Heart right ventricle (tissue), 16 donors: ENCODE measurements at regions of chr19 and their contacts with region 1.

Region 1: GRCh38 chr19:7348587-7349230 is at the start of gene ARHGEF18:
- DNase-seq: no peak
- ATAC-seq: peak in 7 of 8 donors; percentile 39 to 63 (median 56)
- H3K4me3 ChIP-seq: peak within 1 kb of the TSS in 2 of 10 donors; percentile 3 to 56
- H3K27ac ChIP-seq: peak within 1 kb of the TSS in 1 of 10 donors; percentile 86
- H3K4me1 ChIP-seq: peaks cover 0 to 50% (median 0%) of the 10 kb centered on the region in 9 donors
- H3K27me3 ChIP-seq: peaks cover 0 to 17% (median 0%) of the 10 kb centered on the region in 7 donors
- CTCF ChIP-seq: no peak
- total RNA-seq, gene ARHGEF18: 4.8 to 13.3 (median 8.7) TPM

Region 2: GRCh38 chr19:7145494-7146485 is 202.9 kb before region 1 on chr19:
- intact Hi-C with region 1: loop called in 3 of 10 experiments (anchors 2 to 5 kb)
- DNase-seq: no peak
- ATAC-seq: peak in 1 of 8 donors; percentile 35
- H3K4me3 ChIP-seq: no peak overlapping the region
- H3K27ac ChIP-seq: peak overlapping the region in 1 of 10 donors; percentile 64
- H3K4me1 ChIP-seq: peaks cover 0 to 12% (median 0%) of the 10 kb centered on the region in 9 donors
- H3K27me3 ChIP-seq: no peaks in the 10 kb centered on the region
- CTCF ChIP-seq: no peak

Region 3: GRCh38 chr19:7152568-7152967 is 196.1 kb before region 1 on chr19:
- intact Hi-C with region 1: loop called in 3 of 10 experiments (anchors 2 to 5 kb)
- DNase-seq: no peak
- ATAC-seq: no peak
- H3K4me3 ChIP-seq: no peak overlapping the region
- H3K27ac ChIP-seq: peak overlapping the region in 2 of 10 donors; percentile 40 to 41
- H3K4me1 ChIP-seq: peaks cover 0 to 8% (median 3%) of the 10 kb centered on the region in 9 donors
- H3K27me3 ChIP-seq: no peaks in the 10 kb centered on the region
- CTCF ChIP-seq: no peak

Region 4: DNA sequence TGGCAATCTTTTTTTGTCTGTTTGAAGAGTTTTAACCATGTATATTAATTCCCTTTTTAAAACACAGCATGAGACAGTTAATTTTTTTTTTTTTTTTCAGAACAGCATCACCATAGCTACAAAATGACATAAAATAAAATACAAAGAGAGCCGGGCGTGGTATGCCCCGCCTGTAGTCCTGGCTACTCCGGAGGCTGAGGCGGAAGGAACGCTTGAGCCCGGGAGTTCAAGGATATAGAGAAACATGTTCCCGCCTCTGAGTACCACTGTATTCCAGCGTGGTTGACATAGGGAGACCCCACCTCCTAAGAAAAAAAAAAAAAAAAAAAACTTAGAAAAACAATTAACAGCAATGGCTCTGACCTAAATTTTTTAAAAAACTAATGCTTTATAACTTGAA is 44.5 kb before region 1 on chr19:
- intact Hi-C with region 1: no loop called
- DNase-seq: no peak
- ATAC-seq: peak in 1 of 8 donors; percentile 42
- H3K4me3 ChIP-seq: no peak overlapping the region
- H3K27ac ChIP-seq: no peak overlapping the region
- H3K4me1 ChIP-seq: no peaks in the 10 kb centered on the region
- H3K27me3 ChIP-seq: no peaks in the 10 kb centered on the region
- CTCF ChIP-seq: no peak

Region 5: DNA sequence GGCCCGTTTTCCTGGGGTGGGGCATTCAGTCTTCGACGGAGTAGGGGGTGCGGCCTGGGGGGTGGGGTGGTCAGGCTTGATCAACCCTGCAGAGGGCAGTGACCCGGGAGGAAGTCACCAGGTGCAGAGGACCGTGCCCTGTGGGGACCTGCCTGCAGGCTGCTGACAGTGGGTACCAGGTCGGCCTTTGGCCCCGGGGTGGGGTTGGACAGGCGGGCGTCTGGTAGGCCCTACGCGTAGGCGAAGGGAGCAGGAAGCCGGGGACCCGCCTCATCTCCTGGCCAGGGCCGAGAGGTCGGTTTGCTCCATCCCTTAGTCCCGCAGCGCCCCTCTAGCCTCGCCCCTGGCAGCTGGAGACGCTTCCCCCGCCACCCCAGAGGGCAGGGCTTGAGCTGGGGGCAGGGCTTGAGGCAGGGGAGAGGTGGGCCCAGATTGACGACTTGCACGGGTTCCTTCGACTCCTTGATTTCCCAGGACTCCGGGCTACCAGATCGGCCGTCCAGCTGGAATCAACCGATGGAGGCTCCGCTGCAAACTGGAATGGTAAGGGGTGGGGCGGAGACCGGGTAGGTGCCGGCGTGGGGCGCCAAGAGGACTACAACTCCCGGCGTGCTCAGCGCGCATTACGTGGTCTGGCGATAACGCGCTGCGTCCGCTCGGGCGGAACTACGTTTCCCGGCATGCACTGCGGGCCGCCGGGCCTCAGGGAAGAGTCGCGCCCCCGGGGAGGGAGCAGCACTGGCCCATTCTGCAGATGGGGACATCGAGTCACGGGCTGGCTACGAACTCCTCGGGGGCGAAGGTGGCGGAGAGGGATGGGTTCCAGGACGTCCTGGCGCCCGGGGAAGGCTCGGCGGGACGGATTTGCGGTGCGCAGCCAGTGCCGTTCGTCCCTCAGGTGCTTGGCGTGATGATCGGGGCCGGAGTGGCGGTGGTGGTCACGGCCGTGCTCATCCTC is 186.6 kb after region 1 on chr19 and contains the start of gene PNPLA6:
- intact Hi-C with region 1: loop called in 1 of 10 experiments (anchors 10 kb)
- DNase-seq: peak; percentile 96 to 98
- ATAC-seq: peak; percentile 83 to 92 (median 89)
- H3K4me3 ChIP-seq: peak within 1 kb of the TSS; percentile 74 to 98 (median 90)
- H3K27ac ChIP-seq: peak within 1 kb of the TSS; percentile 67 to 95 (median 91)
- H3K4me1 ChIP-seq: peaks cover 0 to 20% (median 14%) of the 10 kb centered on the region in 9 donors
- H3K27me3 ChIP-seq: no peaks in the 10 kb centered on the region
- CTCF ChIP-seq: no peak
- total RNA-seq, gene PNPLA6: 33.9 to 73.8 (median 41.6) TPM

Region 6: DNA sequence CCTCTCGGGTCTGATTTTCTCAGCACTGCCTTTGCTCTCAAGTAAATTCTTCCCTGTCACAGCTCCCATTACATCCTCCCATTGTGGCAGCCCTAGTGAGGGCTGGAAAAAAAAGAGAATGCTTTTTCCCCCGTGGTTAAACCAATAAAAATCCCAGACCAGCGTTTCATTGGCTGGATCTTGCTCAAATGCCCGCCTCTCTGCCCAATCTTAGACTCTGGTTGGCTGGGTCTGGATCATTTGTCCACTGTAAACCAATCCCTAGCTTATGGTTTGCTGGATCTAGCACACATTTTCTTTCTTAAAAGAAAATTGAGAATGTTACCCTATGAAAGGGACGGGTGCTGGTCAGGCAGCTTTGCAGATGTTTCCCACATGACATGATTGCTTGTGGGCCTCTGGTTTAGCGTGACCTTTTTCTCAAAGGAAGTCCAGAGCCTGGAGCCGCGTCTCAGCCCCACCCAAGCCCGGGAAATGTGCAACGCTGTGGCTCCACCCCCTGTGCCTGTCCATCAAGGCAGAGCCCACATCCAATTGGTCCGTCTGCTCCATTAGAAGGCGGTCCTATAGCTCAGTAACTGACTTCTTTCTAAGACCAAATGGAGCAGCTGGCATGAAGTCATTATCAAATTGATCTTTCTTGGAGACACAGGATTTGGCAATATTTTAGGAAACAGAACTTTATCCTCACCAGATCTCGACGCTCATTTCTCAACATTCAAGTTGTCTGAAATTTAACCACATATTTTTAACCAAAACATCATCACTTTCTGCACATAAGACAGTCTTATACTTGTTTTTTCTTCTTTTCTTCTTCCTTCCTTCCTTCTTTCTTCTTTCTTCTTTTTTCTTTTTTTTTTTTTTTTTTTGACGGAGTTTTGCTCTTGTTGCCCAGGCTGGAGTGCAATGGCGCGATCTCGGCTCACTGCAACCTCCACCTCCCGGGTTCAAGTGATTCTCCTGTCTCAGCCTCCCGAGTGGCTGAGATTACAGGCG is 325.6 kb after region 1 on chr19:
- intact Hi-C with region 1: loop called in 2 of 10 experiments (anchors 10 kb)
- DNase-seq: peak; percentile 40 to 64
- ATAC-seq: peak in 7 of 8 donors; percentile 62 to 91 (median 76)
- H3K4me3 ChIP-seq: no peak overlapping the region
- H3K27ac ChIP-seq: peak overlapping the region in 1 of 10 donors; percentile 60
- H3K4me1 ChIP-seq: peaks cover 0 to 34% (median 0%) of the 10 kb centered on the region in 9 donors
- H3K27me3 ChIP-seq: peaks cover 0 to 68% (median 31%) of the 10 kb centered on the region in 7 donors
- CTCF ChIP-seq: no peak

Region 7: DNA sequence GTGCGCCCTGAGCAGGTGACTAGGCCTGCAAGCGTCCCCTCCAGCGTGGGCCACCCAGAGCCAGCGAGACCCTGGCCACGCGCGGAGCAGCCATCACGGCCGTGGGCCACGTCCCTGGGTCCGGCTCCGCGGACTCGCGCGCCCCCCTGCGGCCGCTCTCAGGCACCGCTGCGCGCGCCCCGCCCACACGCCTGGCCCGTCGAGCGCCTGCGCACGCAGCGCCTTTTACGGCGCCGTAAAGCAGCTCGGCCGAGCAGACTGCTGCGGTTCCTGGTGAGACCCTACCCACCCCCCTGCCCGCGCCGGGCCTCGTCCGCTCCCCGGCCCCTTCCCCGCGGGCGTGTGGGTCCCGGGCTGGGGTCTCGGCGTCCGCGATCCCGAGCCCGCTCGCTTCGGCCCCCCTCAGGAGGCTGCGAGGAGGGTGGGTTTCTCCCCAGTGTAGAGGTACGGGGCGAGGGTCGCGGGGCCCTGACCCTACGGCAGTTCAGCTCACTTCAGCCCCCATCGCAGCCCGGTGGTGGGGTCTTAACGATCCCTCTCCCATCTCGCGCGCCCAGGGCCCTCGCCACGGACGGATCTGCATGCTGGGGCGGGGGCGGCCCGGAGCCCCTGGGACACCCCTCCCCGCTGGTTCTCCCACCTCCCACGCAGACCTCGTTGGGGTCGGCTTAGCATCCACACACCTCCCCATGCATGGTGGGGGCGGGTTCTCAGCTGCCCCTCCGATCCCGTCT is 332.1 kb after region 1 on chr19 and contains the start of gene TRAPPC5:
- intact Hi-C with region 1: loop called in 7 of 10 experiments (anchors 5 to 10 kb)
- DNase-seq: peak; percentile 84 to 90
- ATAC-seq: peak; percentile 87 to 93 (median 88)
- H3K4me3 ChIP-seq: peak within 1 kb of the TSS; percentile 94 to 100 (median 100)
- H3K27ac ChIP-seq: peak within 1 kb of the TSS; percentile 33 to 99 (median 90)
- H3K4me1 ChIP-seq: peaks cover 0 to 37% (median 13%) of the 10 kb centered on the region in 9 donors
- H3K27me3 ChIP-seq: peaks cover 0 to 27% (median 15%) of the 10 kb centered on the region in 7 donors
- CTCF ChIP-seq: peak; percentile 86 to 100 (median 98)
- total RNA-seq, gene TRAPPC5: 75.3 to 132 (median 86.0) TPM